Prostate gland (tissue), 2 donors: ENCODE measurements at regions of chr1 and their contacts with region 1.

Region 1: GRCh38 chr1:212455803-212456528 is 23.2 kb downstream of the NENF start:
- DNase-seq: peak; percentile 77
- H3K4me3 ChIP-seq: no peak overlapping the region
- H3K27ac ChIP-seq: no peak overlapping the region
- H3K4me1 ChIP-seq: no peaks in the 10 kb centered on the region
- H3K27me3 ChIP-seq: no peaks in the 10 kb centered on the region
- CTCF ChIP-seq: peak; percentile 92 to 98 (median 96)
- POLR2A ChIP-seq: no peak

Region 2: DNA sequence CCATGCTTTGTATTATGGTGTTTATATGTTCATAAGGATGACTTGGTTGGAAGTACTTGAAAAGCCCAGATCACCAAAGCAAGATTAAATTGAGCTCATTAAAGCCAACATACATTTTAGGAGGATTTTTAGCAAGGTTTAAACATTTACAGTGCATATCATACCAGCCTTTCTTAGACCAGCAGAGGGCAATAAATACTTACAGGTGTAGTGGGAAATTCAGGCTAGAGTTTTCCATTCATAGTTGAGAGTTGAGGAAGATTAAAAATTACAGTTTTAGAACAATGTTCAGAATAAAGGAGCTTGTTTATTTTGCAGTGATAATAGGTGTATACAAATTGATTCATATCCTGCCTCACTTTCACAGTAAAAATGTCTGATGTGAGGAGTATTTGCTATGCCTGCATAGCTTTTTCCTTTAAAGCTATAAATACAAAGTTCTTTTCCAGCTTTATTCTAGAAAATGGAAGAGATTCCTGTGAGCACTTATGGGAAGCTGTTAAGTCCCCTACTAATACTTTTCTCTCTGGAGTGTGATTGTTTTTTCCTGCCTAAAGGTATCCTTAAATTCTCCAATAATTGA is 385.2 kb before region 1 on chr1:
- intact Hi-C with region 1: loop called (anchors 2 kb)
- DNase-seq: peak; percentile 8
- H3K4me3 ChIP-seq: no peak overlapping the region
- H3K27ac ChIP-seq: no peak overlapping the region
- H3K4me1 ChIP-seq: no peaks in the 10 kb centered on the region
- H3K27me3 ChIP-seq: no peaks in the 10 kb centered on the region
- CTCF ChIP-seq: peak; percentile 35 to 91 (median 86)
- POLR2A ChIP-seq: no peak

Region 3: GRCh38 chr1:212368073-212368484 is 87.9 kb before region 1 on chr1:
- intact Hi-C with region 1: loop called (anchors 5 kb)
- DNase-seq: peak; percentile 43
- H3K4me3 ChIP-seq: no peak overlapping the region
- H3K27ac ChIP-seq: no peak overlapping the region
- H3K4me1 ChIP-seq: no peaks in the 10 kb centered on the region
- H3K27me3 ChIP-seq: no peaks in the 10 kb centered on the region
- CTCF ChIP-seq: peak; percentile 42 to 74 (median 58)
- POLR2A ChIP-seq: no peak